ENCODE measurements at regions of chr12 and their contacts with region 1.

Region 1: GRCh38 chr12:132600048-132601032 is 10.0 kb downstream of the LRCOL1 start:
- DNase-seq: peak; percentile 83
- ATAC-seq: peak; percentile 82

Region 2: DNA sequence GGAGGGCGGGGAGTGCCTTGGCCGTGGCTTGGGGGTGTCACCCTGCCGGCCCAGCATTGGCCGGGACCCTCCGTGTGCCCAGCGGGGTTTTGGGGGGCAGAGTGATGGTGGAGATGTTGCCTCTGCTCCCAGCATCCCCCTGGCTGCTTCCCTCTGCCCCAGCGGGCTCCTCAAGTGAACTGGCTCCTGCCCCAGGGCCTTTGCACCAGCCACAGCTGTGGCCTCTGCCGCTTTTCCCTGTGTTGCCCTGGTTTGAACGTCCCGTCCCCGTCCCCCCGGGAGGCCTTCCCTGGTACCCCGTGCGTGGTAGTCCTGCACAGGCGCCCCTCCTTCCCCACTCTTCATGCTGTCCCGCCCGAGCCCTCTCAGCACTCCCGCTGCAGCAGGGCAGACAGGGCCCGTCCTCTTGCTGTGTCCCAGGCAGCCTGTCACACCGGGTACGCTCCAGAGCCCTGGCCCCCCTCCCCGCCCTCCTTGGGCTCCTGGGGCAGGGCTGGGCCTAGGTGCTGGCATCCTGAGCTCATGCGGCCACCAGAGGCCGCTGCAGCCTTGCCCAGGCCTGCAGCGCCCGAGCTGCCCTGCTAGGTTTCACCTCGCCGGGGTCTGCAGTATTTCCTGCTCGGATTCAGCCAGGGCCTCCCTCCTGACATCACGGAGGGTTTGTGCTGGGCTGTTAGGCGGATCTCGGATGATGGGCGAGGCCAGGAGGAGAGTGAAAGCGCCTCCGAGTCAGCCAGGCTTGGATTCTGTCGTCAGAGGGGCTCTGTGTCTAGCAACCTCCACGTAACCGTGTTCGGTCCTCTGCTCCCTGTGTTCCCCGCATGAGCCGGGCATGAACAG is 446.6 kb before region 1 on chr12:
- intact Hi-C with region 1: loop called (anchors 10 kb)
- DNase-seq: no peak
- ATAC-seq: peak; percentile 92

Measured in sciatic nerve (tissue), 2 donors.